ENCODE measurements at regions of chr1 and their contacts with region 1.

Region 1: DNA sequence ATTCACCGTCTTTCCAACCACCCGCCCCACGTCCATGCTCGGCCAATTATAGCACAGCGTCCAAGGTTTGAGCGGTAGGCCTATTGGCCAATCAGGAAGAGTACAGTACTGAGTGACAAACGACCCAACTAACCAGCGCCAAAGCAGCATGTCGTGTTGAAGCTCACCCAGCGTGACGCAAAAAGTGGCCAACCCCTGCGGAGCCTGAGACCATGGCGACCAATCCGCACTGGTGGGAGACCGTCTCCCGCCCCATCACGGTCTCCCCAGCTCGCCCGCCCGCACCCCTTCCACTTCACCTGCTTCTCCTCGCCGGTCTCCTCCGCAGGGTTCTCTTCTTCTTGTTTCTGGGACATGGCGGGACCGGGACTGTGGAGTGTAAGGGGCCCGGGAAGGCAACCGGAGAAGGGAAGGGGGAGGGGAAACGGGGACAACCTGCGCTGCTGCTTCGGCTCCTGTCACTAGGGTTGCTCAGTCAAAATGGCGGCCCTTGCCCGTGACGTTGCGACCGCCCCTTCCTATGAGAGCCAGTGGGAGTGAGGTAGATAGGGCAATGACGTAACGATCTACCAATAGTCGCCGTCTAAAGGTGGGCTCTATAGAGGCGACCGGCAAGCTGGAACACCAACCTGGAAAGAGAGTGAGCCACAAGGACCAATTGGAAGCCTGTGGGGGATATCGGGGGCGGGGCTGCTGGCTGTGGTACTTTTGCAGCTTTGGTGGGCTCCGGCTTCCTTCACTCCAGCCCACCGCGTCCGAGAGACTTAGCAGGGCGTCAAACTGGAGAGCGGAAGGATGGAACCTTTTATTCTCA is at the start of gene ENSA:
- DNase-seq: peak; percentile 98
- ATAC-seq: peak; percentile 89
- H3K4me3 Mint-ChIP-seq: no peak within 1 kb of the TSS
- H3K27ac Mint-ChIP-seq: no peak within 1 kb of the TSS
- H3K4me1 Mint-ChIP-seq: peaks cover 47% of the 10 kb centered on the region
- H3K27me3 Mint-ChIP-seq: no peaks in the 10 kb centered on the region
- CTCF ChIP-seq: no peak
- total RNA-seq, gene ENSA: 177 to 182 TPM

Region 2: DNA sequence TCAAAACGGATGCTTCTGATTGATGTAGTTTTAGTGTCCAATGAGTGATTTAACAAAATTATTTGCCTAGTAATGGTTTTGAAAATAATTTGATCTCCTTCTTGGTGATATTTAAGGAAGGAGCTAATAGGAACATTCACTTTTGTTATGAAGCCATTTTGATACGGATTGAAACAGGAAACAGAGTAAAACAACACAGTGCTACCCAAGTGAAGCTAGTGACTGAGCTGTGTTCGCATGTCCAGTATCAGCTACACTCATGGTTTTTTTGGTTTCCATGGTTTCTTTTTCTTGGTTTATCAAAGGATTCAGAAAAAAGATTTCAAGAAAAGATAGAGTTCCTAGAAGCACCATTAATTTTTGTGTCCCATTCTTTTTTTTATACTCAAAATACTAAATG is 519.7 kb before region 1 on chr1:
- CTCF ChIA-PET with region 1: no interaction called
- POLR2A ChIA-PET with region 1: no interaction called
- intact Hi-C with region 1: no loop called
- DNase-seq: no peak
- ATAC-seq: peak; percentile 77
- H3K4me3 Mint-ChIP-seq: peak overlapping the region; percentile 42
- H3K27ac Mint-ChIP-seq: peak overlapping the region; percentile 85
- H3K4me1 Mint-ChIP-seq: peaks cover 64% of the 10 kb centered on the region
- H3K27me3 Mint-ChIP-seq: no peaks in the 10 kb centered on the region
- CTCF ChIP-seq: no peak

Region 3: DNA sequence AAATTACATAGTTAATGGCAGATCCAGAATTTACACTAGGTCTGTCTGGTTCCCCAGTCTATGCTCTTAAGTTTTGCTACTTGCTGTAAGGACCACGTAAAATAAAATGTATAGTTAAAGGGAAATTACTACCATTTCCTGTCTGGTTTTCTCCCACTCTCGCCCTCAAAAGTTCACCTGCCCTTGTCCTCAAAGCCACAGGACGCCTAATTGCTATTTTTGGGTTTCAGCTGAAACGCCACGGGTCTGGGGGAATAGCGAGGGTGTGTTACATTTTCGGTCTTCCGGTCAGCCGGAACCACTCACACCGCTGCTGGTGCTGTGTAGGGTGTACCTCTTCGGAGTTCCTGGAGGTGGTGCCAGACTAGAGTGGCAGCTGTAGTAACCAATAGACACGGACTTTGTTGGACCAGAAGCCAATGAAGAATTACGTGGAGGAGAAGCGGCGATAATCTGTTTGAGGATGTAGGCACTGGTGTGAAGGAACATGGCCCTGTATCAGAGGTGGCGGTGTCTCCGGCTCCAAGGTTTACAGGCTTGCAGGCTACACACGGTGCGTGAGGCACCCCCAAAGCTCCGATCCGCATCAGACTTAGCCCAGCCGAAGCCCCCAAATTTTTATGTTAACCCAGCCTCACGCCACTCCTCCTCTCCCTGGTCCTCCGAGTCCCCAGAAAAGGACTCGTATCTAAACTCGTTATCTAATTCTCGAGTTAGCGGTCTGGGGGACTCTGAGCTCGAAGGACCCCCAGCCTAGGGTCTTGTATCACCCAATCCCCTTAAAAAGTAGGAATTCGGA is 142.2 kb before region 1 on chr1 and contains the start of gene TARS2:
- CTCF ChIA-PET with region 1: no interaction called
- POLR2A ChIA-PET with region 1: interaction called, 3 read pairs
- intact Hi-C with region 1: loop called (anchors 10 kb)
- DNase-seq: peak; percentile 98
- ATAC-seq: peak; percentile 100
- H3K4me3 Mint-ChIP-seq: peak within 1 kb of the TSS; percentile 98
- H3K27ac Mint-ChIP-seq: peak within 1 kb of the TSS; percentile 99
- H3K4me1 Mint-ChIP-seq: peaks cover 18% of the 10 kb centered on the region
- H3K27me3 Mint-ChIP-seq: no peaks in the 10 kb centered on the region
- CTCF ChIP-seq: no peak
- total RNA-seq, gene TARS2: 43.3 to 44.5 TPM

Region 4: GRCh38 chr1:150613061-150613920 is 16.0 kb before region 1 on chr1:
- CTCF ChIA-PET with region 1: interaction called, 5 read pairs
- POLR2A ChIA-PET with region 1: interaction called, 17 read pairs
- intact Hi-C with region 1: no loop called
- DNase-seq: peak; percentile 83
- ATAC-seq: peak; percentile 62
- H3K4me3 Mint-ChIP-seq: peak overlapping the region; percentile 45
- H3K27ac Mint-ChIP-seq: peak overlapping the region; percentile 91
- H3K4me1 Mint-ChIP-seq: peaks cover 62% of the 10 kb centered on the region
- H3K27me3 Mint-ChIP-seq: no peaks in the 10 kb centered on the region
- CTCF ChIP-seq: no peak

Region 5: GRCh38 chr1:150863724-150864123 is 234.4 kb after region 1 on chr1:
- CTCF ChIA-PET with region 1: no interaction called
- POLR2A ChIA-PET with region 1: no interaction called
- intact Hi-C with region 1: no loop called
- DNase-seq: no peak
- ATAC-seq: no peak
- H3K4me3 Mint-ChIP-seq: no peak overlapping the region
- H3K27ac Mint-ChIP-seq: no peak overlapping the region
- H3K4me1 Mint-ChIP-seq: peaks cover 26% of the 10 kb centered on the region
- H3K27me3 Mint-ChIP-seq: no peaks in the 10 kb centered on the region
- CTCF ChIP-seq: no peak

Measured in activated CD8-positive, alpha-beta T cell treated with anti-CD3 and anti-CD28 coated beads for 36 hours (primary cell).